ENCODE measurements at regions of chr4 and their contacts with region 1.

Region 1: GRCh38 chr4:44616621-44617020 is 34.8 kb downstream of the YIPF7 start:
- DNase-seq: no peak
- H3K4me3 ChIP-seq: no peak overlapping the region
- H3K27ac ChIP-seq: no peak overlapping the region
- H3K4me1 ChIP-seq: no peaks in the 10 kb centered on the region
- H3K27me3 ChIP-seq: no peaks in the 10 kb centered on the region
- CTCF ChIP-seq: no peak
- EP300 ChIP-seq: no peak
- POLR2A ChIP-seq: no peak

Region 2: GRCh38 chr4:45120163-45120562 is 503.5 kb after region 1 on chr4:
- intact Hi-C with region 1: loop called in 1 of 4 experiments (anchors 5 kb)
- DNase-seq: no peak
- H3K4me3 ChIP-seq: no peak overlapping the region
- H3K27ac ChIP-seq: no peak overlapping the region
- H3K4me1 ChIP-seq: no peaks in the 10 kb centered on the region
- H3K27me3 ChIP-seq: no peaks in the 10 kb centered on the region
- CTCF ChIP-seq: no peak
- EP300 ChIP-seq: no peak
- POLR2A ChIP-seq: no peak

Measured in ovary (tissue), 10 donors.